ENCODE measurements at regions of chrX and their contacts with region 1.

Region 1: DNA sequence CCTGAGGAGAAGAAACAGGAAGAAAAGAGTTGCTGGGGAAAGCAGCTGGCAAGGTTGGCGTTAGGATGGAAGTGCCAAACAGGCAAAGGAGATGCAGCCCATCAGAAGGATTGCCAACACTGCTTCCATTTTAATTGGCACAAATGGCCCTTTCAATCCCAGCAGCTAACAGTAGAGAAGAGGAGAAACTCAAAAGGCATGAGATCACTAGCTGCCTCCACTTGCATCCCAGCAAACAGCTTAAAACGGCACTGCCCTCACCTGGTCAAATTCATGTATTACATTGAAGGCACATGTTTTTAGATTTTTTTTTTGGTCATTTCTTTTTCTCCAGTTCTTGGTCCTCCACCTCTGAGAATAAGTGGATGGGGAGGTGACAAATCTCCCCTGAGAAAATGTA is 14.9 kb upstream of the LOC101059915 start:
- DNase-seq: peak in 1 of 2 donors; percentile 78
- ATAC-seq: peak; percentile 59 to 92 (median 84)
- H3K4me3 ChIP-seq: no peak overlapping the region
- H3K4me3 Mint-ChIP-seq: no peak overlapping the region
- H3K27ac ChIP-seq: no peak overlapping the region
- H3K27ac Mint-ChIP-seq: no peak overlapping the region
- H3K4me1 ChIP-seq: peaks cover 5% of the 10 kb centered on the region
- H3K4me1 Mint-ChIP-seq: peaks cover 4 to 8% of the 10 kb centered on the region in 2 donors
- H3K27me3 ChIP-seq: no peaks in the 10 kb centered on the region
- H3K27me3 Mint-ChIP-seq: peaks cover 0 to 10% of the 10 kb centered on the region in 2 donors
- CTCF ChIP-seq: peak; percentile 51

Region 2: GRCh38 chrX:71606536-71607216 is 45.7 kb before region 1 on chrX:
- intact Hi-C with region 1: loop called (anchors 2 kb)
- DNase-seq: peak in 1 of 2 donors; percentile 72
- ATAC-seq: peak; percentile 89 to 96 (median 93)
- H3K4me3 ChIP-seq: no peak overlapping the region
- H3K4me3 Mint-ChIP-seq: peak overlapping the region; percentile 52
- H3K27ac ChIP-seq: peak overlapping the region; percentile 72
- H3K27ac Mint-ChIP-seq: peak overlapping the region; percentile 77 to 88
- H3K4me1 ChIP-seq: peaks cover 42% of the 10 kb centered on the region
- H3K4me1 Mint-ChIP-seq: peaks cover 52 to 63% of the 10 kb centered on the region in 2 donors
- H3K27me3 ChIP-seq: no peaks in the 10 kb centered on the region
- H3K27me3 Mint-ChIP-seq: peaks cover 0 to 17% of the 10 kb centered on the region in 2 donors
- CTCF ChIP-seq: no peak